Stomach (tissue), 19 donors: ENCODE measurements at regions of chr16 and their contacts with region 1.

Region 1: GRCh38 chr16:68229431-68230198 is 6.3 kb downstream of the ESRP2 start:
- DNase-seq: peak; percentile 52 to 76
- H3K4me3 ChIP-seq: no peak overlapping the region
- H3K27ac ChIP-seq: peak overlapping the region in 3 of 5 donors; percentile 10 to 48 (median 19)
- H3K4me1 ChIP-seq: peaks cover 23 to 67% (median 49%) of the 10 kb centered on the region in 4 donors
- H3K27me3 ChIP-seq: no peaks in the 10 kb centered on the region
- CTCF ChIP-seq: peak in 5 of 7 experiments; percentile 79 to 84 (median 81)
- EP300 ChIP-seq: no peak
- POLR2A ChIP-seq: no peak

Region 2: DNA sequence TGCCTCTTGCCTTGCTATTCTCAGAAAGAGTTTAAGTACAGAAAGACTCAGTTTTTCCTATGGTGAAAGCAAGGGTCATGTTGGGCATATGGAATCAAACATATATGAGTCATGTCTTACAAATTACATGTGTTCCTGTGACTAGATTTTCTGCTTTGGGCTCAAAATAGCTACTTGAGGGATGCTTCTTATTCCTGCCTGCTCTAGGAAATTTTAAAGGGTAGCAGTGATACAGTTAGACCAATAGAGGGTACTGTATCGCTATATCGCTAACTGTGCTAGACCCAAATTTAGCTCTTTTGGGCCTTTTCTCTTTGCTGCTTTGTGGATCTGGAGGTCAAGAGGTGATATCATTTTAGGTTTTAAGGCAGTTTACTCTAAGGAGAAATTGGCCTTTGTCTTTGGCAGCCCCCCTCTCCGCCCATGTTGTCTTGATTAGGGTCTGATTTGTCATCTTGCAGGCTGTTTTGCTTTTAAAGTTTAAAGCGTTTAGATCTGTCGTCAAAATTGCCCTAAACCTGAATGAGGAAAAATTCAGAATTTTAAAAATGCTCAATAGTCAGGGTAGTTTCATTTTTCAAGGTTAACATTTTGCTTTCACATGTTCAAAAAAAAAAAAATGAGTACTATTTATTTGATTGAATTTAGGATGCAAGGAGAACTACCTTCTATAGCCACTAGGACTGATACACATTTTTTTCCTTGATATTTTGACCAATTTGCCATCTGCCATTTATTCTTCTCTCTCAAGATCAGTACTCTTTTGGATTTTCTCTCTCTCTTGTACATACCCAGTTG is 135.6 kb before region 1 on chr16:
- intact Hi-C with region 1: loop called (anchors 10 kb)
- DNase-seq: no peak
- H3K4me3 ChIP-seq: no peak overlapping the region
- H3K27ac ChIP-seq: no peak overlapping the region
- H3K4me1 ChIP-seq: peaks cover 23 to 83% (median 46%) of the 10 kb centered on the region in 4 donors
- H3K27me3 ChIP-seq: no peaks in the 10 kb centered on the region
- CTCF ChIP-seq: peak in 4 of 7 experiments; percentile 12 to 30 (median 24)
- EP300 ChIP-seq: no peak
- POLR2A ChIP-seq: no peak